ENCODE measurements at regions of chr14 and their contacts with region 1.

Region 1: GRCh38 chr14:21917699-21918436 is 244.2 kb upstream of the OR4E1 start:
- DNase-seq: peak; percentile 52 to 63 (median 60)
- H3K4me3 ChIP-seq: peak overlapping the region in 1 of 2 donors; percentile 0
- H3K4me3 Mint-ChIP-seq: peak overlapping the region; percentile 55 to 86 (median 82)
- H3K27ac ChIP-seq: peak overlapping the region; percentile 35
- H3K27ac Mint-ChIP-seq: peak overlapping the region; percentile 44 to 95 (median 58)
- H3K4me1 ChIP-seq: peaks cover 64% of the 10 kb centered on the region
- H3K4me1 Mint-ChIP-seq: peaks cover 18 to 65% (median 38%) of the 10 kb centered on the region in 4 donors
- H3K27me3 ChIP-seq: no peaks in the 10 kb centered on the region
- H3K27me3 Mint-ChIP-seq: no peaks in the 10 kb centered on the region

Region 2: DNA sequence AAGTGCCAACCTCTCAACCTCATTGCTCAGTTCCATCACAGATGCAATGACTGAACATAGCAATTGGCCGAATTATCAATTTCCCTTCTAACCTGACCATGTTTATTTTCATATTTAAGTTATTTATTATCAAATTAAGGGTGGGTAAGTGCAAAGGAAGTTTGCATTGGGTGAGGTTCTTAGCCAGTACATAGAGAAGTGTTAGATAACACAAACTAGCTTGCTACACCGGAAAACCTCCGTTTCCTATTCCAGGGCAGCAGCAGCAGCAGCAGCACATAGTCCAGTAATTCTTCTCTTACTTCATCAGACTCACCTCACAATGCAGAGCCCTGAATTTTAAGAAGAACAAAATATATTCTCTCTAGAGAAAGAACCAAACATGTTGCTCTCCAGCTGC is 43.7 kb before region 1 on chr14:
- CTCF ChIA-PET with region 1: interaction called, 19 read pairs
- POLR2A ChIA-PET with region 1: interaction called, 10 read pairs
- intact Hi-C with region 1: no loop called
- DNase-seq: peak in 1 of 5 donors; percentile 37
- H3K4me3 ChIP-seq: peak overlapping the region in 1 of 2 donors; percentile 11
- H3K4me3 Mint-ChIP-seq: peak overlapping the region; percentile 54 to 81 (median 72)
- H3K27ac ChIP-seq: peak overlapping the region; percentile 18
- H3K27ac Mint-ChIP-seq: peak overlapping the region; percentile 75 to 91 (median 88)
- H3K4me1 ChIP-seq: peaks cover 48% of the 10 kb centered on the region
- H3K4me1 Mint-ChIP-seq: peaks cover 15 to 50% (median 36%) of the 10 kb centered on the region in 4 donors
- H3K27me3 ChIP-seq: no peaks in the 10 kb centered on the region
- H3K27me3 Mint-ChIP-seq: no peaks in the 10 kb centered on the region

Region 3: GRCh38 chr14:21894003-21894897 is 23.6 kb before region 1 on chr14:
- CTCF ChIA-PET with region 1: interaction called, 10 read pairs
- POLR2A ChIA-PET with region 1: interaction called, 4 read pairs
- intact Hi-C with region 1: no loop called
- DNase-seq: peak; percentile 39 to 68 (median 46)
- H3K4me3 ChIP-seq: peak overlapping the region in 1 of 2 donors; percentile 22
- H3K4me3 Mint-ChIP-seq: peak overlapping the region; percentile 72 to 82 (median 76)
- H3K27ac ChIP-seq: no peak overlapping the region
- H3K27ac Mint-ChIP-seq: peak overlapping the region in 6 of 7 donors; percentile 58 to 93 (median 82)
- H3K4me1 ChIP-seq: peaks cover 3% of the 10 kb centered on the region
- H3K4me1 Mint-ChIP-seq: peaks cover 7 to 12% (median 11%) of the 10 kb centered on the region in 4 donors
- H3K27me3 ChIP-seq: no peaks in the 10 kb centered on the region
- H3K27me3 Mint-ChIP-seq: peaks cover 0 to 2% of the 10 kb centered on the region in 2 donors

Region 4: DNA sequence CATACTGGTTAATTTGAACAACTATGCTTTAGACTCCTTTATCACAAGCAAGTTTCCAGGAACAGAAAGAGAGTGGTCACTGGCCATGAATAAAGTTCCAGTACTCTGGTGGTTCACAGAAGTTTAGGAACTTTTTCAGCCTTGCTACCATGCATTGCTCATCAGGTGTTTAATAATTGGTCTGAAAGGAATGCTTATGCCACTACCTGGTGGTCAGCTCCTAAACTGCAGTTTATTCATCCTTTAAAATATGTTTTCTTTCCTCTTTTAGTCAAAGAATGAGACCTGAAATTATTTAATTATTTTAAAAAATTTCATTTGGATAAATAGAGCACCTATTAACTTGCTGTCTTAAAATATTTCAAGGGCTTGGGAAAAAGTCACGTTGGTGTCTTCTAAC is 15.8 kb after region 1 on chr14:
- CTCF ChIA-PET with region 1: interaction called, 46 read pairs
- POLR2A ChIA-PET with region 1: interaction called, 15 read pairs
- intact Hi-C with region 1: loop called (anchors 1 kb)
- DNase-seq: peak in 2 of 5 donors; percentile 27 to 35
- H3K4me3 ChIP-seq: no peak overlapping the region
- H3K4me3 Mint-ChIP-seq: no peak overlapping the region
- H3K27ac ChIP-seq: no peak overlapping the region
- H3K27ac Mint-ChIP-seq: no peak overlapping the region
- H3K4me1 ChIP-seq: peaks cover 2% of the 10 kb centered on the region
- H3K4me1 Mint-ChIP-seq: peaks cover 0 to 8% (median 4%) of the 10 kb centered on the region in 4 donors
- H3K27me3 ChIP-seq: no peaks in the 10 kb centered on the region
- H3K27me3 Mint-ChIP-seq: peaks cover 0 to 2% of the 10 kb centered on the region in 2 donors

Region 5: GRCh38 chr14:21978184-21978998 is 60.5 kb after region 1 on chr14:
- CTCF ChIA-PET with region 1: interaction called, 20 read pairs
- POLR2A ChIA-PET with region 1: interaction called, 6 read pairs
- intact Hi-C with region 1: loop called (anchors 2 kb)
- DNase-seq: peak; percentile 60 to 63 (median 60)
- H3K4me3 ChIP-seq: no peak overlapping the region
- H3K4me3 Mint-ChIP-seq: peak overlapping the region; percentile 68 to 81 (median 74)
- H3K27ac ChIP-seq: no peak overlapping the region
- H3K27ac Mint-ChIP-seq: peak overlapping the region in 5 of 7 donors; percentile 14 to 83 (median 66)
- H3K4me1 ChIP-seq: peaks cover 7% of the 10 kb centered on the region
- H3K4me1 Mint-ChIP-seq: peaks cover 6 to 30% (median 19%) of the 10 kb centered on the region in 4 donors
- H3K27me3 ChIP-seq: no peaks in the 10 kb centered on the region
- H3K27me3 Mint-ChIP-seq: peaks cover 0 to 2% of the 10 kb centered on the region in 2 donors

Measured in CD4-positive, alpha-beta memory T cell (primary cell).